Caco-2 (cell line): ENCODE measurements at regions of chr9 and their contacts with region 1.

Region 1: GRCh38 chr9:110069326-110070248 is 138.4 kb downstream of the C9orf152 start:
- DNase-seq: no peak
- H3K4me3 ChIP-seq: no peak overlapping the region
- H3K4me3 Mint-ChIP-seq: no peak overlapping the region
- H3K27ac Mint-ChIP-seq: no peak overlapping the region
- H3K4me1 ChIP-seq: peaks cover 29% of the 10 kb centered on the region
- H3K4me1 Mint-ChIP-seq: peaks cover 30% of the 10 kb centered on the region
- H3K27me3 ChIP-seq: no peaks in the 10 kb centered on the region
- H3K27me3 Mint-ChIP-seq: no peaks in the 10 kb centered on the region
- CTCF ChIP-seq: no peak

Region 2: GRCh38 chr9:110088099-110088498 is 18.5 kb after region 1 on chr9:
- CTCF ChIA-PET with region 1: no interaction called
- POLR2A ChIA-PET with region 1: no interaction called
- intact Hi-C with region 1: loop called (anchors 2 kb)
- DNase-seq: peak; percentile 13 to 62
- H3K4me3 ChIP-seq: no peak overlapping the region
- H3K4me3 Mint-ChIP-seq: no peak overlapping the region
- H3K27ac Mint-ChIP-seq: peak overlapping the region; percentile 14
- H3K4me1 ChIP-seq: peaks cover 43% of the 10 kb centered on the region
- H3K4me1 Mint-ChIP-seq: peaks cover 38% of the 10 kb centered on the region
- H3K27me3 ChIP-seq: no peaks in the 10 kb centered on the region
- H3K27me3 Mint-ChIP-seq: no peaks in the 10 kb centered on the region
- CTCF ChIP-seq: no peak